Activated T-helper 1 cell treated with anti-CD3 and anti-CD28 coated beads, Interleukin-12 subunit alpha, Interleukin-12 subunit beta, Interleukin-2, Interleukin-4 antibody, amounts not matched to agents 30 ng/mL and 10 ng/mL and 1 ng/mL, durations not matched to agents 14 hours and 24 hours and 36 hours (primary cell): ENCODE measurements at regions of chr6 and their contacts with region 1.

Region 1: DNA sequence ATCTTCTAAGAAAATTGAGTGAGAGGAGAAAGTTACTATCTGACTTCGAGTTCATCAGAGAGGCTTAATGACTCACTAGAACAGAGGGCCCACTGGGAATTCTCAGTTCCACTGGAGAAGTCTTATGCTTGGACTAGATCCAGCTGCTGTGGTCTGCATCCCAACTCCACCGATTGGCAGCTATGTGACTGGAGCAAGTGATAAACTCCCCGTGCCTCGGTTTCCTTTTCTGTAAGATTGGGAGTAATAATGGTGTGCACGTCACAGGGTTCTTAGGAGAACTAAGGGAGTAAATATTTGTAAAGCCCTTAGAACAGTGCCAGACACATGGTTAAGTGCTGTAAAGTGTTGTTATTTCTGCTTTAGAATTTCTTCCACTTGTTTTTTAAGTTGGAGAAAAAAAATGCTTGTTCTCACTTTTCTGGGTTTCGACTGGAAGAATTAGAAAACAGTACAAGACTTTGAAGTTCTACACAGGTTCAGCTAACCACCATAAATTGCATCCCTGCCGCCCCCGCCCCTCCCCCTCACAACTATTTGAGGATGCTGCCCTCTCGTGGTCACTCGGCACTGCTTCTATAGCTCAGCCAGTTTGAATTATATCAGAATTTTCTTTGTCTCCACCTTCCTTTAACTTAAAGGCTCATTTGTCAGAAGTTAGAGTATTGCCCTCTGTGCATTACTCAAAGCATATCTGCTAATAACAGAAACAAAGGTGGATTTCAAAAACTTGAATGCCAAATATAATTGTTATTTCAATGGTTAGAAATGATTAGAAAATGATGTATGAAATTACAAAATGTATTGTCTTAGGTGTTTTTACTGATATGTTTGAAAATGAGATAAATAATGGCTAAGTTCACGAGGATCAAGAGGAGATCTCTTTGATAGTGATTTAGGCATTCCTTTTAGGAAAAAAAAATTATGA is 95.0 kb upstream of the IFNGR1 start:
- DNase-seq: peak; percentile 32
- H3K4me3 Mint-ChIP-seq: no peak overlapping the region
- H3K27ac Mint-ChIP-seq: no peak overlapping the region
- H3K4me1 Mint-ChIP-seq: peaks cover 9% of the 10 kb centered on the region
- H3K27me3 Mint-ChIP-seq: peaks cover 15% of the 10 kb centered on the region

Region 2: GRCh38 chr6:136846046-136846445 is 468.1 kb before region 1 on chr6:
- intact Hi-C with region 1: loop called (anchors 5 kb)
- DNase-seq: no peak
- H3K4me3 Mint-ChIP-seq: no peak overlapping the region
- H3K27ac Mint-ChIP-seq: no peak overlapping the region
- H3K4me1 Mint-ChIP-seq: no peaks in the 10 kb centered on the region
- H3K27me3 Mint-ChIP-seq: no peaks in the 10 kb centered on the region

Region 3: GRCh38 chr6:136967876-136968752 is 346.1 kb before region 1 on chr6:
- intact Hi-C with region 1: loop called (anchors 1 kb)
- DNase-seq: peak; percentile 46
- H3K4me3 Mint-ChIP-seq: no peak overlapping the region
- H3K27ac Mint-ChIP-seq: no peak overlapping the region
- H3K4me1 Mint-ChIP-seq: peaks cover 9% of the 10 kb centered on the region
- H3K27me3 Mint-ChIP-seq: peaks cover 43% of the 10 kb centered on the region

Region 4: DNA sequence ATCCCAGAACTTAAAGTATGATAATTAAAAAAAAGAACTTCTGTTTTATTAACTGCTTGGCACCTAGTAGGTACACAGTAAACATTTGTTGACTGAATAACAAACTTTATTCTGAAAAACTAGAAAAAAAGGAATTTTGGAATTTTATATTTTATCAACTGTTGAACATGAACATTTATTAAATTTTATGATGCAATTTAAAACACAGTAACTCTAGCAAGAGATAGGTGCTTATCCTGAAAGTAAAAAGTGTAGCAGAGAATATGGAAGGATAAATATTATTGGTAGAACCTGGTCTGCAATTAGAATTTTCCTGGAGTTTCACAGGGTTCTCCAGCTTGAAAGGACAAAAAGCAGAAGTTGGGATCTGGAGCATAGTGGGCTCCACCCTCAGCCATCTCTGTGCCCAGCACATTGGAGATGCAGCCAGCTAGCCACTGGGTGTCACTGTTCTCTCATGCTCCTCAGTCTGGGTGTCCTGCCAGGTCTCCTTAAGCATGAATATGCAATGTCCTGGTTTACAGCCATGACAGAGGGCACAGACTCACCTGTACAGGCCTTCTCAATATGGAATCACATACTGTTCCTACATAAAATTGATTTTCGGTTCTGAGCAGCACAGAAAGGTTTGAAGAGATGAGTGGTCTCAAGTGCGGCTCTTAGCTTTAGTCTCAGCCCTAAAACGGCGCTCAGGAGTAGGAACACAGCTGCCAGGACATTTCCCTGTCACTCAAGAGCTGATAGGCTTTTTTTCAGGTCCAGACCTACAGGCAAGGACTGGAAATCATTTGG is 237.7 kb before region 1 on chr6:
- intact Hi-C with region 1: loop called (anchors 1 kb)
- DNase-seq: peak; percentile 52
- H3K4me3 Mint-ChIP-seq: no peak overlapping the region
- H3K27ac Mint-ChIP-seq: no peak overlapping the region
- H3K4me1 Mint-ChIP-seq: no peaks in the 10 kb centered on the region
- H3K27me3 Mint-ChIP-seq: peaks cover 30% of the 10 kb centered on the region

Region 5: GRCh38 chr6:137136065-137136464 is 178.1 kb before region 1 on chr6:
- intact Hi-C with region 1: loop called (anchors 2 kb)
- DNase-seq: no peak
- H3K4me3 Mint-ChIP-seq: no peak overlapping the region
- H3K27ac Mint-ChIP-seq: no peak overlapping the region
- H3K4me1 Mint-ChIP-seq: peaks cover 6% of the 10 kb centered on the region
- H3K27me3 Mint-ChIP-seq: peaks cover 22% of the 10 kb centered on the region

Region 6: GRCh38 chr6:137271245-137272183 is 42.7 kb before region 1 on chr6:
- intact Hi-C with region 1: loop called (anchors 1 kb)
- DNase-seq: no peak
- H3K4me3 Mint-ChIP-seq: no peak overlapping the region
- H3K27ac Mint-ChIP-seq: no peak overlapping the region
- H3K4me1 Mint-ChIP-seq: peaks cover 13% of the 10 kb centered on the region
- H3K27me3 Mint-ChIP-seq: peaks cover 31% of the 10 kb centered on the region